ENCODE measurements at regions of chr15 and their contacts with region 1.

Region 1: GRCh38 chr15:90869601-90870353 is 1.4 kb downstream of the FURIN start:
- DNase-seq: peak in 1 of 5 donors; percentile 69
- H3K4me3 ChIP-seq: peak overlapping the region in 1 of 2 donors; percentile 42
- H3K4me3 Mint-ChIP-seq: peak overlapping the region; percentile 84 to 96 (median 88)
- H3K27ac ChIP-seq: peak overlapping the region; percentile 68
- H3K27ac Mint-ChIP-seq: peak overlapping the region; percentile 92 to 98 (median 94)
- H3K4me1 ChIP-seq: peaks cover 46% of the 10 kb centered on the region
- H3K4me1 Mint-ChIP-seq: peaks cover 23 to 65% (median 40%) of the 10 kb centered on the region in 4 donors
- H3K27me3 ChIP-seq: no peaks in the 10 kb centered on the region
- H3K27me3 Mint-ChIP-seq: no peaks in the 10 kb centered on the region

Region 2: GRCh38 chr15:90839187-90840071 is 30.3 kb before region 1 on chr15:
- CTCF ChIA-PET with region 1: no interaction called
- POLR2A ChIA-PET with region 1: interaction called, 15 read pairs
- intact Hi-C with region 1: no loop called
- DNase-seq: no peak
- H3K4me3 ChIP-seq: no peak overlapping the region
- H3K4me3 Mint-ChIP-seq: peak overlapping the region in 7 of 8 donors; percentile 17 to 82 (median 43)
- H3K27ac ChIP-seq: peak overlapping the region; percentile 7
- H3K27ac Mint-ChIP-seq: peak overlapping the region; percentile 41 to 98 (median 96)
- H3K4me1 ChIP-seq: peaks cover 33% of the 10 kb centered on the region
- H3K4me1 Mint-ChIP-seq: peaks cover 9 to 30% (median 20%) of the 10 kb centered on the region in 4 donors
- H3K27me3 ChIP-seq: no peaks in the 10 kb centered on the region
- H3K27me3 Mint-ChIP-seq: peaks cover 1% of the 10 kb centered on the region in 2 donors

Region 3: DNA sequence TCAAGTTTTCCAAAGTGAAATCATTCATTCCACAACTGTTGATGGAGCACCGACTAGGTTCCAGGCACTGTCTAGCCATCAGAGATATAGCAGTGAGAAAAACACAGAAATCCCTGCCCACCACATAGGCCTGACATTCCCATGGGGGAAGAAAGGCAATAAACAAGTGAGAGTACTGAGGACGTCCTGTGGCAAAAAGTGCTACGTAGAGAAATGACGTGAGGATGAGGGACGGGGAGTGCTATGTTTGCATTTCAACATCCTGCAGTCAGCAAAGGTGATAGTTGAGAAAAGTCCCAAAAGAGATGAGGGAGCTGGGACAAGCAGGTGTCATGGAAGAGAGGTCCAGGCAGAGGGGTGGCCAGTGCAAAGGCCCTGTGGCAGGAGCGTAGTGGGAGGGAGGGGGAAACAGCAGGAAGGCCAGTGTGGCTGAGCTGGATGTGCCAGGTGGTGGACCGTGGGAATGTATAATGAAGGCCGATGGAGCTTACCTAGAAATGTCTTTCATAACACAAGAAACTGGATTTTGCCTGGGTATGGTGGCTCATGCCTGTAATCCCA is 11.8 kb before region 1 on chr15:
- CTCF ChIA-PET with region 1: interaction called, 6 read pairs
- POLR2A ChIA-PET with region 1: interaction called, 9 read pairs
- intact Hi-C with region 1: loop called (anchors 2 kb)
- DNase-seq: peak in 3 of 5 donors; percentile 39 to 53 (median 40)
- H3K4me3 ChIP-seq: no peak overlapping the region
- H3K4me3 Mint-ChIP-seq: peak overlapping the region in 3 of 8 donors; percentile 18 to 63 (median 33)
- H3K27ac ChIP-seq: peak overlapping the region; percentile 61
- H3K27ac Mint-ChIP-seq: peak overlapping the region; percentile 4 to 96 (median 91)
- H3K4me1 ChIP-seq: peaks cover 46% of the 10 kb centered on the region
- H3K4me1 Mint-ChIP-seq: peaks cover 29 to 61% (median 41%) of the 10 kb centered on the region in 4 donors
- H3K27me3 ChIP-seq: no peaks in the 10 kb centered on the region
- H3K27me3 Mint-ChIP-seq: no peaks in the 10 kb centered on the region

Region 4: GRCh38 chr15:91165850-91166249 is 296.1 kb after region 1 on chr15:
- CTCF ChIA-PET with region 1: no interaction called
- POLR2A ChIA-PET with region 1: no interaction called
- intact Hi-C with region 1: no loop called
- DNase-seq: no peak
- H3K4me3 ChIP-seq: no peak overlapping the region
- H3K4me3 Mint-ChIP-seq: no peak overlapping the region
- H3K27ac ChIP-seq: no peak overlapping the region
- H3K27ac Mint-ChIP-seq: no peak overlapping the region
- H3K4me1 ChIP-seq: no peaks in the 10 kb centered on the region
- H3K4me1 Mint-ChIP-seq: no peaks in the 10 kb centered on the region
- H3K27me3 ChIP-seq: no peaks in the 10 kb centered on the region
- H3K27me3 Mint-ChIP-seq: peaks cover 4 to 9% of the 10 kb centered on the region in 2 donors

Region 5: GRCh38 chr15:91278791-91279404 is 409.1 kb after region 1 on chr15:
- CTCF ChIA-PET with region 1: no interaction called
- POLR2A ChIA-PET with region 1: no interaction called
- intact Hi-C with region 1: no loop called
- DNase-seq: no peak
- H3K4me3 ChIP-seq: no peak overlapping the region
- H3K4me3 Mint-ChIP-seq: no peak overlapping the region
- H3K27ac ChIP-seq: no peak overlapping the region
- H3K27ac Mint-ChIP-seq: no peak overlapping the region
- H3K4me1 ChIP-seq: no peaks in the 10 kb centered on the region
- H3K4me1 Mint-ChIP-seq: no peaks in the 10 kb centered on the region
- H3K27me3 ChIP-seq: peaks cover 4% of the 10 kb centered on the region
- H3K27me3 Mint-ChIP-seq: peaks cover 9 to 12% of the 10 kb centered on the region in 2 donors

Measured in CD4-positive, alpha-beta memory T cell (primary cell).